Pancreas (tissue), 10 donors: ENCODE measurements at regions of chr4 and their contacts with region 1.

Region 1: DNA sequence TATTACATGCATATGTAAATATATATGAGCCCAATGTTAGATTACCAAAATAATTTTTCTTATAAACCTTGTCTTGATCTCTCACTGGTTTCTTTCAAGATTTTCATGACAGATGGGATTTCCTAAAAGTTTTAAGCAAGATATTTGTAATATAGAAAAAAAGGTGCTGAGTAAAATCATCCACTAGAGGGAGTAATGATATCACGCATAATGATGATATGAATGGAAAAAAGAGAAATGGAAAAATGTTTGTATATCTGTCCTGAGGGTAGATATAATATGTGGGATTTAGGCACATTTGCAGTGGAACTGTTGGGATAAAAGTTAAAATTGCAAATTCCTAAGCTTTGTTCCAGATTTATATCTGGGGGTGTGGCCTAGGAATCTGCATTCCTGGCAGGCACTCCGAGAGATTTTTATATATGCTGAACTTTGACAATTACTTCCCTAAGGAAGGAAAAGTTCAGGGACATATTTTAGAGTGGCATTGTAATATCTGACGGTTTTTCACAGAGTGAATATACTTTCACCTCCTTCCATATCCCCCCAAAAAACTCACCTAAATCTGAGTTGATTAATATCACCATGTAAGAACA is 60.5 kb downstream of the TMA16 start:
- DNase-seq: no peak
- ATAC-seq: peak in 1 of 4 donors; percentile 29
- H3K4me3 ChIP-seq: no peak overlapping the region
- H3K27ac ChIP-seq: no peak overlapping the region
- H3K4me1 ChIP-seq: peaks cover 0 to 6% (median 0%) of the 10 kb centered on the region in 3 donors
- H3K27me3 ChIP-seq: peaks cover 0 to 9% (median 0%) of the 10 kb centered on the region in 4 donors
- CTCF ChIP-seq: peak; percentile 18 to 57 (median 42)

Region 2: GRCh38 chr4:164725066-164725465 is 1170.1 kb after region 1 on chr4:
- intact Hi-C with region 1: loop called in 1 of 3 experiments (anchors 10 kb)
- DNase-seq: no peak
- ATAC-seq: no peak
- H3K4me3 ChIP-seq: no peak overlapping the region
- H3K27ac ChIP-seq: no peak overlapping the region
- H3K4me1 ChIP-seq: no peaks in the 10 kb centered on the region
- H3K27me3 ChIP-seq: no peaks in the 10 kb centered on the region
- CTCF ChIP-seq: no peak